ENCODE measurements at regions of chr15 and their contacts with region 1.

Region 1: DNA sequence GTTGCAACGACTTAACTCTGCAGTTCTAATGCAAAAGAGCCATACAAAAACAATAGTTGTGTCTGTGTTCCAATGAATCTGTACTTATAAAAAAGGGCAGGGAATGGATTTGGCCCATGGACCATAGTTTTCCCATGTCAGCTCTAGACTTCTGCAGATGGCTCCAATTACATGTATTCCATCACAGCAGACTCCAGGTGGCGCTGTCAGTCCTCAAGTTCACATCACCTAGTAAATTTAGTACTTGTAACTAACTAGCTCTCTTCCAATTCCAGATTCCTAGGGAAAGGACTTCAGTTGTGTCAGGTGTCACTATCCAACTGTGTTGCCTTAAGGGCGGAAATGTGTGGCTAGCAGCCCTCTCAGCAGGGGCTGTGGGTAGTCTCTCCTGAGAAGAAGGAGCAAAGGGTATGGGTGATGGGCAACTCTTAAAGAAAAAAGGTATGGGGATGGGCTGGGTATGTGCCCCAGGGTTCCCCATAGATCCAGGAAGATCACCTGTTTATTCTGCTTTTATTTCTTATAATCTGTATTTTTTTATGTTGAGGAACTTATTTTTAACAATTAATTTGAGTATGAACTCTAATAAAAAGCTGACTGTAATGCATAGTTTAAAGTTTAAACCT is 36.2 kb downstream of the BBS4 start:
- DNase-seq: peak; percentile 68
- ATAC-seq: no peak
- H3K4me3 ChIP-seq: no peak overlapping the region
- H3K4me3 Mint-ChIP-seq: no peak overlapping the region
- H3K27ac ChIP-seq: no peak overlapping the region
- H3K27ac Mint-ChIP-seq: no peak overlapping the region
- H3K4me1 ChIP-seq: no peaks in the 10 kb centered on the region
- H3K4me1 Mint-ChIP-seq: no peaks in the 10 kb centered on the region
- H3K27me3 ChIP-seq: no peaks in the 10 kb centered on the region
- H3K27me3 Mint-ChIP-seq: no peaks in the 10 kb centered on the region
- CTCF ChIP-seq: peak; percentile 88

Region 2: GRCh38 chr15:72579814-72580213 is 142.4 kb before region 1 on chr15:
- CTCF ChIA-PET with region 1: no interaction called
- POLR2A ChIA-PET with region 1: no interaction called
- intact Hi-C with region 1: no loop called
- DNase-seq: no peak
- ATAC-seq: no peak
- H3K4me3 ChIP-seq: no peak overlapping the region
- H3K4me3 Mint-ChIP-seq: no peak overlapping the region
- H3K27ac ChIP-seq: no peak overlapping the region
- H3K27ac Mint-ChIP-seq: no peak overlapping the region
- H3K4me1 ChIP-seq: no peaks in the 10 kb centered on the region
- H3K4me1 Mint-ChIP-seq: no peaks in the 10 kb centered on the region
- H3K27me3 ChIP-seq: no peaks in the 10 kb centered on the region
- H3K27me3 Mint-ChIP-seq: no peaks in the 10 kb centered on the region
- CTCF ChIP-seq: no peak

Region 3: GRCh38 chr15:72751751-72752455 is 29.7 kb after region 1 on chr15:
- CTCF ChIA-PET with region 1: interaction called, 25 read pairs
- POLR2A ChIA-PET with region 1: no interaction called
- intact Hi-C with region 1: no loop called
- DNase-seq: peak; percentile 48
- ATAC-seq: peak; percentile 36
- H3K4me3 ChIP-seq: no peak overlapping the region
- H3K4me3 Mint-ChIP-seq: no peak overlapping the region
- H3K27ac ChIP-seq: peak overlapping the region in 1 of 2 donors; percentile 35
- H3K27ac Mint-ChIP-seq: peak overlapping the region; percentile 78
- H3K4me1 ChIP-seq: peaks cover 12 to 13% of the 10 kb centered on the region in 2 donors
- H3K4me1 Mint-ChIP-seq: peaks cover 18% of the 10 kb centered on the region
- H3K27me3 ChIP-seq: no peaks in the 10 kb centered on the region
- H3K27me3 Mint-ChIP-seq: no peaks in the 10 kb centered on the region
- CTCF ChIP-seq: no peak

Region 4: DNA sequence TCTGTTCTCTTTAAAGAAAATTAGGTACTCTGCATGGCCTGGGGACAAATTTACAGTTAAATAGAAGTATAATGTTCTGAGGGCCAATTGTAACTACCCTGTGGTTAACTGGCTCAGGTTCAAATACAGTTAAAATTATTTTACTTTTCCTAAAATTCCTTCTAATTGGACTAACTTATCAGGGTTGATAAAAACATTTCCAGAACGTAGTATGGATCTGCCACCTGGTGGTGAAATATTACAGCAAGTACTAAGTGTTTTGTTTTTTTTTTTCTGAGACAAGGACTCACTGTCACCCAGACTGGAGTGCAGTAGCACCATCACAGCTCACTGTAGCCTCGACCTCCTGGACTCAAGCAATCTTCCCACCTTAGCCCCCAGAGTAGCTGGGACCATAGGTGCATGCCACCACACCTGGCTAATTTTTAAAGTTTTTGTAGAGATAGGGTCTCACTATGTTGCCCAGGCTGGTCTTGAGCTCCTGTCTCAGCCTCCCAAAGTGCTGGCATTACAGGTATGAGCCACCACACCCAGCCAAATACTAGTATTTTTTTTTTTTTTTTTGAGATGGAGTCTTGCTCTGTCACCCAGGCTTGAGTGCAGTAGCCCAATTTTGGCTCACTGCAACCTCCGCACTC is 359.3 kb after region 1 on chr15:
- CTCF ChIA-PET with region 1: interaction called, 28 read pairs
- POLR2A ChIA-PET with region 1: no interaction called
- intact Hi-C with region 1: no loop called
- DNase-seq: peak; percentile 53
- ATAC-seq: no peak
- H3K4me3 ChIP-seq: no peak overlapping the region
- H3K4me3 Mint-ChIP-seq: no peak overlapping the region
- H3K27ac ChIP-seq: no peak overlapping the region
- H3K27ac Mint-ChIP-seq: no peak overlapping the region
- H3K4me1 ChIP-seq: no peaks in the 10 kb centered on the region
- H3K4me1 Mint-ChIP-seq: no peaks in the 10 kb centered on the region
- H3K27me3 ChIP-seq: peaks cover 0 to 4% (median 0%) of the 10 kb centered on the region in 4 experiments
- H3K27me3 Mint-ChIP-seq: peaks cover 12% of the 10 kb centered on the region
- CTCF ChIP-seq: peak; percentile 69

Region 5: GRCh38 chr15:73240866-73241499 is 518.8 kb after region 1 on chr15:
- CTCF ChIA-PET with region 1: interaction called, 9 read pairs
- POLR2A ChIA-PET with region 1: no interaction called
- intact Hi-C with region 1: loop called (anchors 10 kb)
- DNase-seq: peak; percentile 72
- ATAC-seq: peak; percentile 36
- H3K4me3 ChIP-seq: no peak overlapping the region
- H3K4me3 Mint-ChIP-seq: no peak overlapping the region
- H3K27ac ChIP-seq: no peak overlapping the region
- H3K27ac Mint-ChIP-seq: no peak overlapping the region
- H3K4me1 ChIP-seq: no peaks in the 10 kb centered on the region
- H3K4me1 Mint-ChIP-seq: no peaks in the 10 kb centered on the region
- H3K27me3 ChIP-seq: no peaks in the 10 kb centered on the region
- H3K27me3 Mint-ChIP-seq: peaks cover 22% of the 10 kb centered on the region
- CTCF ChIP-seq: peak; percentile 94

Region 6: DNA sequence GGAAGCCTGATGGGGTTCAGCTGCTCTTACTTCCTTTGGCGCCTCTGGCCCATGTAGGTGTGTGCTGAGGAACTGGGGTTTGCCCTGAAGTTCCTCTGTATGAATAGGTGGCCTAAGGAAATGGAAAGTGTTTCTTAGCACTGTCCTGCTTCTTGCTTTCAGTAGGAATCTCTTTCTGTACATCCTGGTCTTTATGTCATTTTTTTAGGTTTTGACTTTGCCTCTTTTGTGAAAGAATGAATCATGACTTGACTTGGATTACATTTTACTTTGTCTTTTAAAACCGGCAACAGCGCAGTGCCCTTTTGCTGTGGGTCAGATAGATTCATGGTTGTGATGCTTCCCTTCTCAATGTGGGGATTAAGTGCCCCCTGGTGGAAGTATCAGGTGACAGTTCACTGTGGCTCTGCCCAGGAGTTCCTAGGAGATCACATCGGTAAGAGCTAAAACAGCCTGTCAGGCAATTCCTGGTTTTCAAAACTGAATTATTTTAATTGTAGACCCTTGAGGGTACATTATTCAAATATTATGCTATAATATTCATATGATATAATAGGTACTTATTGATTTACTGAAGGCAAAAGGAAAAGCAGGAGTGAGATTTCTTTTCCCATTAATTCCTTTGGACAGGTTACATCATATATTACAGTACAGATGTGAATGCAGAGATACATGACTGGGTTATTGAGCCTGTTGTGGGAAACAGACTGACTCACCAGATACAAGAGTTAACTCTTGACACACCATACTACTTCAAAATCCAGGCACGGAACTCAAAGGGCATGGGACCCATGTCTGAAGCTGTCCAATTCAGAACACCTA is 551.2 kb after region 1 on chr15:
- CTCF ChIA-PET with region 1: interaction called, 10 read pairs
- POLR2A ChIA-PET with region 1: no interaction called
- intact Hi-C with region 1: no loop called
- DNase-seq: peak; percentile 53
- ATAC-seq: peak; percentile 45
- H3K4me3 ChIP-seq: no peak overlapping the region
- H3K4me3 Mint-ChIP-seq: no peak overlapping the region
- H3K27ac ChIP-seq: no peak overlapping the region
- H3K27ac Mint-ChIP-seq: no peak overlapping the region
- H3K4me1 ChIP-seq: peaks cover 0 to 3% of the 10 kb centered on the region in 2 donors
- H3K4me1 Mint-ChIP-seq: peaks cover 3% of the 10 kb centered on the region
- H3K27me3 ChIP-seq: no peaks in the 10 kb centered on the region
- H3K27me3 Mint-ChIP-seq: peaks cover 10% of the 10 kb centered on the region
- CTCF ChIP-seq: peak; percentile 87

Measured in B cell (primary cell).